Mammary epithelial cell (primary cell): ENCODE measurements at regions of chr5 and their contacts with region 1.

Region 1: DNA sequence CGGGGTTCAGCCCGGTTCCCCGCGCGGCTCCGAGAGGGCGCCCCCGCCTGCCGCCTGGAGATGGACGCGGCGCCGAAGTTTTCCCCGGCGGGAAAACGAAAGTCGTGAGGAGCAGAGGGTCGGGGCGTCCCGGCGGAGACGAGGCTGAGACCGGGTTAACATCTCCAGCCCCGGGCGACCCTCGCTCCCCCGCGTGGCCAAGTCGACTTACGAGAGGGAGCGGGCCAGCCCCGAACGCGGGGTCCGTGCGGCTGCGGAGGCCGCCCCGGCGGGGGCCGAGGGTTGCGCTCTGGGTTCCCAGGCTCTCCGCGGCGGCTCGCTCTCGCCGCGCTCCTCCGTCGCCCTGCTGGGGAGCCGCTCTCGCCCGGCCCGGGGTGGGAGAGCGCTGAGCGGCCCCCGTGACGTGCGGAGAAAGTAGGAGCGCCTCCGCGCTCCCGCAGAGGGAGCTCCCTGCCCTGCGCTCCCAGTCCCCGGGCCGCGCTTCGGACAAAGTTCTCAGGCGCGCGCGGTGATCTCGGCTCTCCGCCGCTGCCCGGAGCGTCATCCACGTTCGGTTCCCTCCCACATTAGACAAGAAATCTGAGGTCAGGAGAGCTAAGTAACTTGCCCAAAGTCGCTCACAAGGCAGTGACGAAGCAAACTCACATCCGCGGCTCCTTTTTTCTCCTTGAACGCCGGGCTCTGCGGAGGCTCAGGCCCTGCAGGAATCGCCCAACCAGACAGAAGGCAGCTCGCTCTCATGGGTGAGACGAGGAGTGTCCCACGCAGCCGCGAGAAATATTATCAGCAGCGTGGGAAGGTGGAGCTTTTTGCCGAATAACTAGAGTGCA is 1.2 kb upstream of the GCNT4 start:
- DNase-seq: peak; percentile 92
- H3K4me3 ChIP-seq: peak overlapping the region; percentile 74 to 82 (median 75)
- H3K27ac ChIP-seq: peak overlapping the region; percentile 87
- H3K4me1 ChIP-seq: peaks cover 34% of the 10 kb centered on the region
- H3K27me3 ChIP-seq: no peaks in the 10 kb centered on the region
- CTCF ChIP-seq: peak in 1 of 2 donors; percentile 46

Region 2: GRCh38 chr5:74919487-74919886 is 134.0 kb before region 1 on chr5:
- CTCF ChIA-PET with region 1: no interaction called
- dilution Hi-C with region 1: no loop called
- in situ Hi-C with region 1: no loop called
- intact Hi-C with region 1: loop called (anchors 2 kb)
- DNase-seq: peak; percentile 45
- H3K4me3 ChIP-seq: no peak overlapping the region
- H3K27ac ChIP-seq: no peak overlapping the region
- H3K4me1 ChIP-seq: peaks cover 5% of the 10 kb centered on the region
- H3K27me3 ChIP-seq: no peaks in the 10 kb centered on the region
- CTCF ChIP-seq: peak; percentile 43 to 57

Region 3: DNA sequence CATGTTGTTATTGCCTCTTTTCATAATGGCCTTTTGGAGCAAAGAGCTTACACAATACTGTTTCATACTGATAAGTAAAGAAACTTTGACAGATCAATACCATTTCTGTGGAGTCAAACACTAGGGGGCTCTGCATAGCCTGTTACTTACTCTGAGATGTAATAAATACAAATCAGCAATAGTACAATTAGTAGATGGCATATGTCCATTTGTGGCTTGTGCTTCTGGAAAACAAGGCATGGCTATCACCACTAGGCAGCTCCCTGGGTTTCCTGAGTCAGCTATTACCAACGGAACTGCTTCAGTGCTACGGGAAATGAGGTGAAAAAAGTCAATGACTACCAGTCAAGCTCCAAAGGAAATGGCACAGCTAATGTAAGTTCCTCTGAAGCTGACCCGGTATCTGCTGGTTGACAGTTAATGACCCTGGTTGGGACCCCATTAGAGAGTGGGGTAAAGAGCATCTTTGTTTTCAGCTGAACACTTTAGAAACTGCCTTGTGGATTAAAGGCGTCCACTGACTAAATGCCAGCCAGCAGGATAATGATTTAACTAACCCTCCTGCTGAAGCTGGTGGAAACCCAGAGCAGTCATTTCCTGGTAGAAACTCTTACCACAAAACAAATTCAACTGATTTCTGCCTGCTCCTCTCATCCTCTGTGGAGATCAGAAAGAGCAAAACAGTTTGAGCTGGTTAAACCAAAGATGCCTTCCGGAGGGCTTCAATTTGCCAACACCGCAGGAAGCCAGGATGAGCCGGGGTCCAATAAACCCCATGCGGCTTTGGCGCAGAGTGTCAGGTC is 118.4 kb before region 1 on chr5:
- CTCF ChIA-PET with region 1: no interaction called
- dilution Hi-C with region 1: no loop called
- in situ Hi-C with region 1: no loop called
- intact Hi-C with region 1: loop called (anchors 2 kb)
- DNase-seq: peak; percentile 59
- H3K4me3 ChIP-seq: no peak overlapping the region
- H3K27ac ChIP-seq: no peak overlapping the region
- H3K4me1 ChIP-seq: no peaks in the 10 kb centered on the region
- H3K27me3 ChIP-seq: no peaks in the 10 kb centered on the region
- CTCF ChIP-seq: peak; percentile 36 to 52

Region 4: GRCh38 chr5:75156585-75156984 is 103.1 kb after region 1 on chr5:
- CTCF ChIA-PET with region 1: no interaction called
- dilution Hi-C with region 1: no loop called
- in situ Hi-C with region 1: no loop called
- intact Hi-C with region 1: loop called (anchors 1 kb)
- DNase-seq: peak; percentile 19
- H3K4me3 ChIP-seq: no peak overlapping the region
- H3K27ac ChIP-seq: no peak overlapping the region
- H3K4me1 ChIP-seq: peaks cover 7% of the 10 kb centered on the region
- H3K27me3 ChIP-seq: no peaks in the 10 kb centered on the region
- CTCF ChIP-seq: peak; percentile 24 to 37

Region 5: DNA sequence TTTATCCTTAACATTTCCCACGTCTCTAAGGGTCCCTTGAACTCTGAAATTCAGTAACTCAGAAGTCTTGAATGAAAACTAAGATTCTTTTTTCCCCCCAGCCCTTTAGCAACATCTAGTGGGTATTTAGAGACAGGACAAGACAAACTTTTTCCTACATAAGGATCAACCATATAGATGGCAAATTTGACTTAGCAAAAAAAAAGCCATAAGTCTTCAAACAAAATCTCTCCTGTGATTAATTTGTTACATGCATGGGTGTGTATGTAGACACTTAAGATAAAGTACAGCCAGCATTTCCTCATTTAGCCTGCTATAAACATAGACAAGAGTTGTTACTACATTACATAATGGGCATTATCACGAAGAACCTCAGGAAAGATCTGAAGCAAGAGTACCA is 212.2 kb after region 1 on chr5:
- CTCF ChIA-PET with region 1: no interaction called
- dilution Hi-C with region 1: no loop called
- in situ Hi-C with region 1: loop called in 1 of 2 experiments (anchors 10 kb)
- intact Hi-C with region 1: loop called (anchors 1 kb)
- DNase-seq: peak; percentile 33
- H3K4me3 ChIP-seq: no peak overlapping the region
- H3K27ac ChIP-seq: no peak overlapping the region
- H3K4me1 ChIP-seq: no peaks in the 10 kb centered on the region
- H3K27me3 ChIP-seq: no peaks in the 10 kb centered on the region
- CTCF ChIP-seq: peak; percentile 69 to 84